ENCODE measurements at regions of chr19 and their contacts with region 1.

Region 1: DNA sequence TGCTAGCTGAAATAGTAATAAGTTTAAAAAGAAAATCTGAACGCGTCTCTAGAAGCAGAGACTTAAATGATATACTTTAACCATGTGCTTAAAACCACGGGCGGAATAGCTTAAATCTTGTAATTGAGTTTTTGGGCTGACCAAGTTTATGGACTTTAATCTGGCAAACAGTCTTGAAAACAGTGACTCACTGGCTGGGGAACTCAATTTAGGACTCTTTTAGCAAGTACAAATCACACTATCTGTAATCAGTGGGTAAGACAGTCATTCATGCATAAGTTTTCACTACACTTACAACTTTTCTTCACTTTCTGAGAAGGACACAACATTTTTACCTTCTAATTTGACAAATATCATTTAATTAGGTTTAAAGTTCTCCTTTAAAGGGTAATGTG is 26.8 kb downstream of the ZNF627 start:
- DNase-seq: no peak
- H3K4me3 ChIP-seq: no peak overlapping the region
- H3K27ac ChIP-seq: no peak overlapping the region
- H3K4me1 ChIP-seq: no peaks in the 10 kb centered on the region
- H3K27me3 ChIP-seq: peaks cover under 1% of the 10 kb centered on the region; the same call in 1 of the 2 replicates
- CTCF ChIP-seq: no peak

Region 2: GRCh38 chr19:11597202-11598102 is 26.6 kb before region 1 on chr19 and contains the start of gene ZNF627:
- CTCF ChIA-PET with region 1: no interaction called
- POLR2A ChIA-PET with region 1: interaction called, 19 read pairs
- intact Hi-C with region 1: no loop called
- DNase-seq: peak; percentile 98
- H3K4me3 ChIP-seq: peak within 1 kb of the TSS; percentile 97
- H3K27ac ChIP-seq: peak within 1 kb of the TSS; percentile 65
- H3K4me1 ChIP-seq: peaks cover 14% of the 10 kb centered on the region
- H3K27me3 ChIP-seq: no peaks in the 10 kb centered on the region
- CTCF ChIP-seq: 0 out of 2 replicates have a peak, but pooled peaks have one; percentile 22
- total RNA-seq, gene ZNF627: 11.4 and 12.6 TPM in 2 replicates